Activated CD4-positive, alpha-beta memory T cell treated with anti-CD3 and anti-CD28 coated beads for 36 hours (primary cell): ENCODE measurements at regions of chr3 and their contacts with region 1.

Region 1: DNA sequence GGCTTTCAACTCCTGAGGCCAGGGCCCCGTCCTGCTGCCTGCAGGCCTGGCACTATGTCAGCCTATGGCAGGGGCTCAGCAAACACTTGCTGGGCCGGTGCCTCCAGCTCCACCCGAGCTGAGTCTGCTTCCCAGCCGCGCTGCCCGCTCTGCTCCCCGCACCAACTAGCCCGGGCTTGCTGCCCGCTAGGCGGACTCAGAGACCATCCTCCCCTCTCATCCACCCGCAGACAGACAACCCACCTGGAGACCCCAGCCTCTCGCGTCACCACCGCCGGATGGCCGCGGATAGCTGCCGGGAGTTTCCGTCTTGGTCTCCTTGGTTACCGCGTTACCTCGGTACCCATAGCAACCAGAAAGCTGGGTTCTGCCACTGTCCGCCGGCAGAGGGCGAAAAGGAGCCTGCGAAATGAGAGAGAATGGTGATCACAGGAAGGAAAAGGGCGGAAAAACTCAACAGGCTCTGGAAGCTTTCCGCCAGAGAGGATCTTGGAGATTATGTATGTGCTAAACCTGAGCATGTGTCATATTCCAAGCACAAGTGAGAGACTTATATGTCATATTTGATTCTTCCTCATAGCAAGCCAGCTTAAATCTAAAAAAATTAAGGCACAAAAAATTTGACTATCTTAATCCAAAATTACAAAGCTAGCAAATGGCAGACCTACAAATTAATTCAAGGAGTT is at the start of gene ZBBX:
- DNase-seq: peak; percentile 89
- H3K4me3 Mint-ChIP-seq: peak within 1 kb of the TSS; percentile 77
- H3K27ac Mint-ChIP-seq: no peak within 1 kb of the TSS
- H3K4me1 Mint-ChIP-seq: peaks cover 8% of the 10 kb centered on the region
- H3K27me3 Mint-ChIP-seq: peaks cover 8% of the 10 kb centered on the region
- total RNA-seq, gene ZBBX: not detected

Region 2: DNA sequence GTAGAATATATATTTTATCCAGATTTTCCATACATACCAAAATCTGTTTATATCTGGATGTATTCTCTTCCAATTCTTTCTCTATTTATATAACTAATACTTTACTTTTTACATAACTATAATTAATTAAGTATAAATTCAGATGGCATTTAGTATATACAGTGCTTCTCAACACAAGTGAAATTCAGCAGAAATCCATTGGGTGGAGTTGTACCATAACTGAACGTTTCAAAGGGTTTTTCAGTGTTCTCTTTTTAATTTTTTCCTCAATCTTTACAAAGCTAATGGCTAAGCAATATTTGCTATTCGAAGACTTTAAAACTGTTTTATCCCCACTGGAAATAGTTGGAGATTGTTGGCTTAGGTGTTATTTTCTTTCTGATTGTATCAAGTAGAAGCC is 13.9 kb after region 1 on chr3:
- CTCF ChIA-PET with region 1: interaction called, 13 read pairs
- POLR2A ChIA-PET with region 1: no interaction called
- intact Hi-C with region 1: no loop called
- DNase-seq: no peak
- H3K4me3 Mint-ChIP-seq: no peak overlapping the region
- H3K27ac Mint-ChIP-seq: no peak overlapping the region
- H3K4me1 Mint-ChIP-seq: no peaks in the 10 kb centered on the region
- H3K27me3 Mint-ChIP-seq: peaks cover 7% of the 10 kb centered on the region

Region 3: DNA sequence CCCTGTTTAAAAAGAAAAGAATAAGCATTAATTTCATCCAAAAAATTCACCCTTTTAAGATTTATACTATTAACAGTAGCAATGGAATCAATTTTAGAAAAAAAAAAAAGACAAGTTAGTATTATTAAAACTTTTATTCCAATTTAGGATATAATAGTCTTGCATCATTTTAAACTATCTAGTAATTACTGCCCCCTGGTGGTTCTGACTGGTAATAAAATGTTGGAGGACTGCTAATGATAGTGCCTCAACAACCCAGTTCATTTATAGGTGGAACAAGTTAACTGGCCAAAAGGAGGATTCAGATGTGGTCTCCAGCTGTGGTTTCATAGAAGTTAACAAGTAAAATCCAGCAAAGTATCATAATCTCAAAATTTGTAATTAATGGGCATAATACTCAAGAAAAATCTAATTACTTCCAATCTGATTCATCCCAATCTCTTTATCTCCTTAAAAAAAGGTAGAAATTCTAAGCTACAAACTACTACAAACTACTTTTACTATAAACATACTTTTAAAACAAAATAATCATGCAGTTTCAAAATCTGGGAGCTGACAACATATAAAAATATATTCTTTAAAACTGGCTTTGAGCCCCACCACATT is 304.3 kb after region 1 on chr3:
- CTCF ChIA-PET with region 1: interaction called, 36 read pairs
- POLR2A ChIA-PET with region 1: no interaction called
- intact Hi-C with region 1: loop called (anchors 1 kb)
- DNase-seq: no peak
- H3K4me3 Mint-ChIP-seq: no peak overlapping the region
- H3K27ac Mint-ChIP-seq: no peak overlapping the region
- H3K4me1 Mint-ChIP-seq: peaks cover 10% of the 10 kb centered on the region
- H3K27me3 Mint-ChIP-seq: no peaks in the 10 kb centered on the region

Region 4: GRCh38 chr3:167882067-167882667 is 502.0 kb after region 1 on chr3:
- CTCF ChIA-PET with region 1: interaction called, 40 read pairs
- POLR2A ChIA-PET with region 1: no interaction called
- intact Hi-C with region 1: loop called (anchors 1 kb)
- DNase-seq: no peak
- H3K4me3 Mint-ChIP-seq: no peak overlapping the region
- H3K27ac Mint-ChIP-seq: no peak overlapping the region
- H3K4me1 Mint-ChIP-seq: peaks cover 3% of the 10 kb centered on the region
- H3K27me3 Mint-ChIP-seq: peaks cover 11% of the 10 kb centered on the region